Right ventricle myocardium inferior (tissue), 1 donor: ENCODE measurements at regions of chr19 and their contacts with region 1.

Region 1: DNA sequence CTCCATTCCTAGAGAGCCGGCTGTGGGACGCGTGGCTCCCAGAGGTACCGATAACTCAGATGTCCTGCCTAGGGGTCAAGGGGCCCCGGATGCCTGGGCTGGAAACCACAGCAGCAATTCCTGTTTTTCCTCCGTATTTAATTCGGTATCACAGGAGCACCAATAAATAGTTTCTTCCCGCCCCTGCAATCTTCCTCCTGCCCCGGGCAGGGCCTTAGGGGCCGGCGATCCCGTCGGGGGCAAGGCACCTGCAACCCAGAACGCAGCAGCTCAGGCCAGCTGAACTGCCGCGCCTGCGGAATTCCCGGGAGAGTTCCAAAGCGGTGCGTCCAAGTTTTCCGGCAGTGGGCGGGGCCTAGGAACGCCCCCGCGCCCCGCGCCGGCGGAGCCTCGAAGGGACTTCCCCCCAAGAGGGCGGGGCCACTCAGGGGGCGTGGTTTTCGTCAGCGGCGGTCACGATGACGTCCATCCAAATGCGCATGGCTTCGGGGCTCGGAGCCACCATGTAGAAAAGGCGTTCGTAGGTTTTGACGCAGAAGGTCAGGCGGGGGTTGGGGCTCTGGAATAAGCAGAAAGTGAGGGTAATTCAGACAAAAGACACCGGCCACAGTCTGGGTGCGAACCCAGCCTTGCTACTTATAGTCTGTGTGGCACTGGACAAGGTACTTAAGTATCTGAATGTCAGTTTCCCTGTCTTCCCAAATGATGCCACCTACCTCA is 9.7 kb upstream of the LYPD3 start:
- DNase-seq: peak; percentile 95
- ATAC-seq: peak; percentile 96

Region 2: DNA sequence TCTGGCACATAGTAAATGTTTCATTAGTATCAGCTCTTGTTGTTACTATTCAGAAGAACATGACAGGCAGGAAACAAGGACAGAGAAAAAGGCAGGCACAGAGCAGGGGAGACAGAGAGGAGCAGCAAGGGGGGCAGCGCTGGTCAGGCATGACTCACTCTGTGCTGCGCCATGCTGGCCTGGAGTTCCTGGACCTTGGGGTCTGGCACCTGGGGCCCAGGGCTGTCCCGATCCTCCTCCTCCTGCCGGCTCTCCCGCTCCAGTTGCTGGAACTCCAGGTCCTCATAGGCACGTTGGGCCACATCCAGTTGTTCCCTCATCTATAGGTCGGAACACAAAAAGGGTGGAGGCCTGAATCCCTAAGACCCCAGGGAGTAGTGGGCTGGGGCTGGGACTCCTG is 21.8 kb after region 1 on chr19:
- intact Hi-C with region 1: loop called (anchors 2 kb)
- DNase-seq: no peak
- ATAC-seq: no peak